ENCODE measurements at regions of chr5 and their contacts with region 1.

Region 1: DNA sequence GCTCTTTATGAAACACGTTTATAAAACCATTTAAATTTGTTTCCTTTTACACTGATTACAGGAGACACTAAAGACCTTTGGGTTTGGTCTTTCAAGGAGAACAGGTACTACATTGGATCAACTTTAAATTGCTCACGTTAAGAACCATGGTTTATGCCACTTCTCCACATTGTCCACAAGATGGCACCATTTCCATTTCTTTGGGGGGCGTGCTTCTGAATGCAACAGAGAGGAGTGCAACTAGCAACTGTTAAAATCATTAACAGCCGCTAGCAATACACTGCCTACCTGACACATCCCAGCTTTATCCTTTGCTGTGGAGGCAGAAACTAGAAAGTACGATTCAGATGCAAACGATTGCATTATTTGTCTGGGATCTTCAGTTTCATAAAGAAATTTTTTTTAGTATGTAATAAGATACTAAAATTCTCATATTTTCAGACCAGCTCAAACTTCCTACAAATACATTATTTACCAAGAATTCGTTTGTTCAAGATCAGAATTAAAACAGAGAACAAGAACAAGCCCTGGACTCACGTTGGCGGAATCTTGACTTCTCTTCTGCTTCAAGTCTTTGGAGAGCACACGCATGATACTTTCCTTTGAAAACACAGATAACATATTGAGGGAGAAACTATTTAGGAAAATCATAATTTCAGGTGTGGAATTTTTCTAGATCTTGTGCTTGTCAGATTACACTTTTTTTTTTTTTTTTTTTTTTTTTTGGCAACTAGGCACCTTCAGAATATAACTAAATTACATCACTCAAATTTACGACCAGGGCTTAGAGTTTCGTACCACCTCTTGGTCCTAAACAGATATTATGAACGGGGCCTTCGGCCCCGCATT is 702 bp downstream of the CDC20B start:
- DNase-seq: peak; percentile 61
- H3K4me3 Mint-ChIP-seq: peak overlapping the region; percentile 86
- H3K27ac Mint-ChIP-seq: no peak overlapping the region
- H3K4me1 Mint-ChIP-seq: peaks cover 46% of the 10 kb centered on the region
- H3K27me3 Mint-ChIP-seq: peaks cover 78% of the 10 kb centered on the region

Region 2: DNA sequence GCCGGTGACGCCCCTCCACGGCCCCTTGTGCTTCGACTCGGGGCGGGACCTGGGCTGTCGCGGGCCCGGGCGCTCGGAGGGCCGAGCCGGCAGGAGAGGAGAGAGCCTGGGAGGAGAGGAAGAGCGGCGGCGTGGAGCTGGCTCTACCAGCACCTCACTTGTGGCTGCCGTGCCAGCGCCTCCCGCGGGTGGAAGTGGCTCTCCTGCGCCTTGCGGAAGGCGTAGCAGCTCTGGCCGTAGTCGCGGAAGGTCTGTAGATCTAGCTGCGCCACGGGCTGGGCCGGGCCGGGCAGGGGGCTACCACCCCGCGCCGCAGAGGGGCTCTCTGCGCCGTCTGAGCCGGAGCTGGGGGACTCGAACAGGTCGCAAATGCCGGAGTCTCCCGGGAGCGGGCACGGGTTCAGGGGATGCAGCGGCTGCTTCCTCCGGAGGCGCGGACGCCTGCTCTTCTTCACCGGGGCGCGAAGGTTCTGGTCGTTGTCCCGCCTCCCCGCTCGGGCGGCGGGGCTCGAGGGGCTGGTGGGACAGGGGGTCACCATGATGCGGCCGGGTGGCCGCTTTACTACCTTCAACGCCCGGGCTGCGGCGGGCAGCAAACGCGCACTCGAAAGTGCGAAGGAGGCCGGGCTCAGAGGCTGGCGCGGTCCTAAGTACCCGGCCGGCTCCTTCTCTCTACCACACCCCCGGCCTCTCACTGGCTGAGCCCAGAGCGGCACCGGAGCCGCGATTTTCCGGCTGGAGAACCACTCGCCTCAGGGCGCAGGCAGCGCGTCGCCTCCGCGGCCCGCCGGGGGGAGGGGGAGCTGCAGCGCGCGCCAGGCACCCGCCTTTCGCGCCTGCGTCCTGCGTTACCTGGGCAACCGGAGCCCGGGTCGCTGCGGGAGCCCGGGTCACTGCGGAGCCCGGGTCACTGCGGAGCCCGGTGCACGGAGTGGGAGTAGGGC is 61.0 kb after region 1 on chr5 and contains the start of gene CCNO:
- intact Hi-C with region 1: loop called (anchors 1 kb)
- DNase-seq: peak; percentile 58
- H3K4me3 Mint-ChIP-seq: peak within 1 kb of the TSS; percentile 83
- H3K27ac Mint-ChIP-seq: peak within 1 kb of the TSS; percentile 61
- H3K4me1 Mint-ChIP-seq: peaks cover 42% of the 10 kb centered on the region
- H3K27me3 Mint-ChIP-seq: peaks cover 80% of the 10 kb centered on the region
- total RNA-seq, gene CCNO: 0.10 and 0.20 TPM in 2 replicates

Region 3: DNA sequence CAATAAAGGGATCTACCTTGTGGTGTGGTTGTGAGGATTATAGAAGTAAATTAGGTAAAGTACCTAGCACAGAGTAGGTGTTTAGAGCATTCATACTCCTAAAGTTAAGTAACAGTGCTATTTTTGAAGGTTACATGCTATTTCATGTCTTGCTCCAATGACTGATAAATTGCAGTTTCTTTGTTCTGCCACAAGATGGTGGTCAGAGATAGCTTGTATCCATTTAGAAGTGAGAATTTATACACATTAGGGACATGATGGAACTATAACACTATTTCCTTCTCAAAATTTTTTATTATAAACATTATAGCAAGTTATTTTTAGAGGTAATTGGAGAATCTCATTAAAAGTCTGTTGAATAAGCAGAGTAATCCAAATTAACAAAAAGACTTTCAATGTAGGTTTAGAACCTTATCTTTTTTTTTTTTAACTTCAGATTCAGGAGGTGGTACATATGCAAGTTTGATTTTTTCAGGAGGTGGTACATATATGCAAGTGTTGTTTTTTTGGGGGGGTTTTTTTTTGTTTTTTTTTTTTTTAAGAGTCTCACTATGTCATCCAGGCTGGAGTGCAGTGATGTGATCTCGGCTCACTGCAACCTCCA is 152.6 kb after region 1 on chr5:
- intact Hi-C with region 1: loop called (anchors 1 kb)
- DNase-seq: no peak
- H3K4me3 Mint-ChIP-seq: no peak overlapping the region
- H3K27ac Mint-ChIP-seq: no peak overlapping the region
- H3K4me1 Mint-ChIP-seq: peaks cover 21% of the 10 kb centered on the region
- H3K27me3 Mint-ChIP-seq: no peaks in the 10 kb centered on the region

Region 4: DNA sequence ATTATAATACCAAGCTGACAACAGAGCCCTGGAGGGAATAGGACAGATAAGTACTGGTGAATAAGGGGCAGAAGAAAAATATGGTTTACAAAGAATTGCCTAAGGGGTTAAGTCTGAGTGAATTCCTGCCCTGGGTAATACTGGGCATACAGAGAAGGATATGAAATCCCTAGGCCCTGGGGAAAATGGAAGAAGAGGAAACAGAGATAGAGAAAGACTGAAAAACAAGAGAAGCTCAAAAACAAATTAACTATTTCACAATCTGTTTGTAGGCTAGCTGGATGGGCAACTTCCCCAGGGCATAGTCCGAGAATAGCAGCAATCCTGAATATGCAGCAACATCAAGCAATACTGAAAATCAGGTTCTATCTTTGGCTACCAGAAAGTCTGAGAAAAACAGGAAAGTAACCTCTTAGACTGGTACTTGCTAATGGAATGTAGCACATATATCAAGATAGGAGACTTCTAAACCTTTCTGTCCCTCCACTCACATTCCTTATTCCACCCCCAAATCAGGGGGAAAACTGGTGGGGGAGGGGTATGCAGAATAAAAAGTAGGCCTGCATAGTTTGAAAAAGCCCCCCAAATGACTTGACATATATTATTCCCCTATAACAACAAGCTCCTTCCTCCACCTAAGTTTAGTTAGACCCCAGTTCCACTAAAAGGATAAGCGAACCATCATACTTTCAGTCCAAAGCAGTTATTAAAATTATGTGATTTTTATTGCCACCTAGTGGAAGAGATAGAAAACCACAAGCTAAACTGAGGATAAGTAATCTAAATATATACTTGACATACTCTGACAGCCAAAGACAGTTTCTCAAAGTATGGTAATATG is 519.2 kb after region 1 on chr5:
- intact Hi-C with region 1: loop called (anchors 1 kb)
- DNase-seq: no peak
- H3K4me3 Mint-ChIP-seq: no peak overlapping the region
- H3K27ac Mint-ChIP-seq: no peak overlapping the region
- H3K4me1 Mint-ChIP-seq: peaks cover 11% of the 10 kb centered on the region
- H3K27me3 Mint-ChIP-seq: no peaks in the 10 kb centered on the region

Region 5: DNA sequence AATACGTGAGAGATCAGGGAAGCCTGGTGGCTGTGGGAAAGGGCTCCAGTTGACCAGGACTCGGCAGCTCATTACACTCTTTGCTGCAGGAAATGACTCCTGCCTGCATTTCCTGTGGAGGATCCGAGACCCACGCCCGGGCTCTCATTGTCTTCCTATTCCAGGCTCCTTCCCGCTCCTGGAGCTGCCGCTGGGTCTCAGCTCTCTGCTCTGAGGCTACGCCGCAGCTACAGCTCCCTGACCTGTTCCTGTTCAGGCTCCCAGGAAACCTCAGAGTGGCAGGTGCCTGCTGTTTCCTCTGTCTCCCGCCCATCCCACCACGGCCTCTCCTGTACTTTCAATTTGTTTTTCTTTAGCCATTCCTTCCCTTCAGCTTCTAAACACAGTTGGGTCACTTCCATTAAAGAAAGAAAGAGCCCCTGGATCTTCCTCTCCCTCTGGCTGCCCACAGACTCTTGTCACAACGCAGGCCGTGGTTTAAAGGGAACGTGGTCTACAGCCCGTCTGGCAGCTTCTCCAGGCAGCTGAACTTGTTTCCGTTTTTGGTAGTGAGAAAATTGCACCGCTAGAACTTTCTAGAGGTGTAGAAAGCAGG is 751.0 kb after region 1 on chr5:
- intact Hi-C with region 1: loop called (anchors 5 kb)
- DNase-seq: no peak
- H3K4me3 Mint-ChIP-seq: peak overlapping the region; percentile 82
- H3K27ac Mint-ChIP-seq: peak overlapping the region; percentile 79
- H3K4me1 Mint-ChIP-seq: peaks cover 41% of the 10 kb centered on the region
- H3K27me3 Mint-ChIP-seq: peaks cover 1% of the 10 kb centered on the region

Measured in activated T-helper 1 cell treated with anti-CD3 and anti-CD28 coated beads, Interleukin-12 subunit alpha, Interleukin-12 subunit beta, Interleukin-2, Interleukin-4 antibody, amounts not matched to agents 30 ng/mL and 10 ng/mL and 1 ng/mL, durations not matched to agents 14 hours and 24 hours and 36 hours (primary cell).